ENCODE measurements at regions of chr3 and their contacts with region 1.

Region 1: GRCh38 chr3:148697306-148698189 is at the start of gene AGTR1:
- DNase-seq: peak; percentile 78 to 88 (median 86)
- ATAC-seq: peak; percentile 87 to 92
- H3K4me3 ChIP-seq: peak within 1 kb of the TSS; percentile 48
- H3K27ac ChIP-seq: peak within 1 kb of the TSS; percentile 26
- H3K4me1 ChIP-seq: no peaks in the 10 kb centered on the region
- H3K27me3 ChIP-seq: no peaks in the 10 kb centered on the region
- total RNA-seq, gene AGTR1: 10.7 to 21.5 (median 13.8) TPM

Region 2: GRCh38 chr3:148643389-148643840 is 54.1 kb before region 1 on chr3:
- intact Hi-C with region 1: loop called in 1 of 4 experiments (anchors 10 kb)
- DNase-seq: no peak
- ATAC-seq: peak; percentile 52 to 65
- H3K4me3 ChIP-seq: no peak overlapping the region
- H3K27ac ChIP-seq: peak overlapping the region; percentile 37
- H3K4me1 ChIP-seq: peaks cover 3% of the 10 kb centered on the region
- H3K27me3 ChIP-seq: no peaks in the 10 kb centered on the region